ENCODE measurements at regions of chr15 and their contacts with region 1.

Region 1: DNA sequence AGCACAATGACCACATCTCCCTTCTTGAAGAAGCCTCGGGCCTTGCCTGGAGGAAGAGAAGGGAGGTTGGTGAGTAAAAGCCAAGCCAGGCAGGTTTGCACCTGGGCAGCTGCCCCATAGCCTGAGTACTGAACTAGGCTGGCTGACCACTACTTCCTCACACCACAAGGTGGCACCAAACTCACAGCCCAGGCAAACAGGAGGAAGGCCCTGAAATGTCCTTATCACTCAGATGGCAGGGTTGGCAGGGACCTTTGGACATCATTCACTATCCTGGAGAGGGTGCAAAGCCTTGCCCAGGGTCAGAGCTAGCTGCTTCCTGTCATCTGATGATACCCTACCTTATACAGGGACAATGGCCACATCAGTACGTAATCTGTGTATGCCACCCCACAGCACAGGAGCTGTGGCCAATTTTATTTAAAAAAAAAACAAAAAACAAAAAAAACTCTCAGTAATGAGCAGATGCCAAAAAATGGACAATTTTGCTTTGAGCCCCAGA is 2.2 kb upstream of the GRAMD2A start:
- DNase-seq: peak; percentile 82
- H3K4me3 Mint-ChIP-seq: no peak overlapping the region
- H3K27ac Mint-ChIP-seq: no peak overlapping the region
- H3K4me1 Mint-ChIP-seq: peaks cover 22% of the 10 kb centered on the region
- H3K27me3 Mint-ChIP-seq: peaks cover 11% of the 10 kb centered on the region

Region 2: GRCh38 chr15:72217216-72217615 is 17.5 kb after region 1 on chr15:
- CTCF ChIA-PET with region 1: interaction called, 65 read pairs
- POLR2A ChIA-PET with region 1: no interaction called
- intact Hi-C with region 1: no loop called
- DNase-seq: no peak
- H3K4me3 Mint-ChIP-seq: no peak overlapping the region
- H3K27ac Mint-ChIP-seq: no peak overlapping the region
- H3K4me1 Mint-ChIP-seq: peaks cover 38% of the 10 kb centered on the region
- H3K27me3 Mint-ChIP-seq: no peaks in the 10 kb centered on the region

Region 3: GRCh38 chr15:72272213-72273002 is 72.6 kb after region 1 on chr15 and contains the start of gene PARP6:
- CTCF ChIA-PET with region 1: interaction called, 5 read pairs
- POLR2A ChIA-PET with region 1: no interaction called
- intact Hi-C with region 1: loop called (anchors 2 kb)
- DNase-seq: peak; percentile 99
- H3K4me3 Mint-ChIP-seq: peak within 1 kb of the TSS; percentile 84
- H3K27ac Mint-ChIP-seq: peak within 1 kb of the TSS; percentile 89
- H3K4me1 Mint-ChIP-seq: peaks cover 33% of the 10 kb centered on the region
- H3K27me3 Mint-ChIP-seq: no peaks in the 10 kb centered on the region
- total RNA-seq, gene PARP6: 42.8 to 44.5 TPM

Region 4: GRCh38 chr15:72285927-72286516 is 86.3 kb after region 1 on chr15:
- CTCF ChIA-PET with region 1: interaction called, 20 read pairs
- POLR2A ChIA-PET with region 1: interaction called, 3 read pairs
- intact Hi-C with region 1: loop called (anchors 1 kb)
- DNase-seq: peak; percentile 55
- H3K4me3 Mint-ChIP-seq: no peak overlapping the region
- H3K27ac Mint-ChIP-seq: no peak overlapping the region
- H3K4me1 Mint-ChIP-seq: no peaks in the 10 kb centered on the region
- H3K27me3 Mint-ChIP-seq: no peaks in the 10 kb centered on the region